Tibial artery (tissue), 4 donors: ENCODE measurements at regions of chr6 and their contacts with region 1.

Region 1: DNA sequence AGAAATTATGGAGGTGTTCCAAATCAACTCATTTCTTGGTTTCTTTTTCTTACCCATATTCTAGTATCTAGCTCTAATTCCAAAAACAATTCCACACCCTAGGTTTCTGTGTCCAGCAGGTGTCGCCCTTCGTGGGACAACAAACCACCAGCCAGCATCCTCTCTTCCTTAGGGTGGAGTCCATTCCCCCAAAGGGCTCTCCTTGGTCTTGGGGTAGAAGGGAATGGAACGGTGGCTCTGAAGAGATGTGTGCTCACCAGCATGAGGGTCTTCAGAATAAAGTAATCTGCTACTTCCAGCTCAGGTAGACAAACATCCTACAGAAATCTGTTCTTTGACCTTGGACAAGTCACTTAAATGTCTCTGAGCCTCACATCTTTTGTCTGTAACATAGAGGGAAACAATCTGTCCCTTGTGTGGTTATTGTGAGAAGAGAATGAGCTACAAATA is 7.2 kb downstream of the HLA-DMB start:
- DNase-seq: peak; percentile 84 to 87
- H3K4me3 ChIP-seq: no peak overlapping the region
- H3K27ac ChIP-seq: no peak overlapping the region
- H3K4me1 ChIP-seq: no peaks in the 10 kb centered on the region
- H3K27me3 ChIP-seq: peaks cover 0 to 3% of the 10 kb centered on the region in 2 donors
- CTCF ChIP-seq: peak; percentile 67 to 73

Region 2: GRCh38 chr6:32968093-32968866 is 34.6 kb after region 1 on chr6 and contains the start of gene BRD2:
- intact Hi-C with region 1: loop called (anchors 5 kb)
- DNase-seq: peak; percentile 95 to 98
- H3K4me3 ChIP-seq: peak within 1 kb of the TSS; percentile 90 to 94
- H3K27ac ChIP-seq: peak within 1 kb of the TSS; percentile 99
- H3K4me1 ChIP-seq: peaks cover 0 to 36% (median 12%) of the 10 kb centered on the region in 4 donors
- H3K27me3 ChIP-seq: no peaks in the 10 kb centered on the region
- CTCF ChIP-seq: no peak